ENCODE measurements at regions of chr10 and their contacts with region 1.

Region 1: GRCh38 chr10:9922126-9922870 is 1095.4 kb upstream of the CELF2 start:
- DNase-seq: no peak
- ATAC-seq: no peak
- H3K4me3 ChIP-seq: no peak overlapping the region
- H3K27ac ChIP-seq: no peak overlapping the region
- H3K4me1 ChIP-seq: no peaks in the 10 kb centered on the region
- H3K27me3 ChIP-seq: peaks cover 0 to 4% (median 0%) of the 10 kb centered on the region in 7 donors
- CTCF ChIP-seq: no peak

Region 2: GRCh38 chr10:9869606-9870176 is 52.6 kb before region 1 on chr10:
- intact Hi-C with region 1: loop called in 1 of 10 experiments (anchors 10 kb)
- DNase-seq: no peak
- ATAC-seq: no peak
- H3K4me3 ChIP-seq: no peak overlapping the region
- H3K27ac ChIP-seq: no peak overlapping the region
- H3K4me1 ChIP-seq: no peaks in the 10 kb centered on the region
- H3K27me3 ChIP-seq: no peaks in the 10 kb centered on the region
- CTCF ChIP-seq: no peak

Region 3: DNA sequence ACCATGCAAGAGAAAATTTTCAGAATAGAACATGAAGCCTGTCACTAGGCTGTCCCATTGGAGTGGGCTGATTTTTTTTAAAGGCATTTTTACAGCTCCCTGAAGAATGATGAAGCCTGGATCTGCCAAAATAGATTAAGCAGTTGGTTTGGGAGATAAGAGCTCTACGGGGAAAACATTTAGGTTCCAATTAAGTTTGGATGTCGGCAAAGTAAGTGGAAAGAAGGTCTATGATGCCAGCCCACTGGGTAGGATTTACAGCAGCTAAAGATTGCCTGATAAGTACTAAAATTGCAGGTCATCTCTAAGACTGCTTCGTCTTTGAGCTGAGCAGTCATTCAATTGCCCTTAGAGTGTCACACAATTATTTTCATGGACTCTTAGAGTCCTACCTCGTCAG is 156.1 kb after region 1 on chr10:
- intact Hi-C with region 1: no loop called
- DNase-seq: no peak
- ATAC-seq: no peak
- H3K4me3 ChIP-seq: no peak overlapping the region
- H3K27ac ChIP-seq: no peak overlapping the region
- H3K4me1 ChIP-seq: no peaks in the 10 kb centered on the region
- H3K27me3 ChIP-seq: no peaks in the 10 kb centered on the region
- CTCF ChIP-seq: no peak